ENCODE measurements at regions of chr9 and their contacts with region 1.

Region 1: DNA sequence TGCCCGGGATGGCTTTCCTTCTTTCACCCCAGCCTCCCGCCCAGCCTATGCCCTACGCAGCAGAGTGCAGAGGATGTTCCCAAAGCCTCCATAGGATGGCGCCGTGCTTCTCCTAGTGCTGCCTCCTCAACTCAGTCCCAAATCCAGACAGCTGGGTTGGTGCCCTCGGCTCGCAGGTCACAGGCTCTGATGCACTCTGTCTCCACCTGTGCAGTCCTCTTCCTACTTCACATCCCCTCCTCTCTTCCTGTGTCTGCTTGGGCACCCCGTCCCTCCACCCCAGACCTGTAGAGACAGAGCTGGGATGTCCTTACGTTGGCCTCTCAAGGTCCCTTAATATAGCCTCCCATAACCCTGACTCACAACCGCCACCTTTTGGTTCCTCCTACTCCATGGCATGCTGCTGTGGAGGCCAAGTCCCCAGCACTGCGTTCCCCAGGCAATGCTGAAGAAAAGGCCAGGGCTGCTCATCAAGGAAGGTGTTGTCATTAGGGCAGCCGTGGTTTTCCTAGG is 314.4 kb downstream of the GADD45G start:
- DNase-seq: peak; percentile 41
- H3K4me3 Mint-ChIP-seq: peak overlapping the region; percentile 16
- H3K27ac Mint-ChIP-seq: no peak overlapping the region
- H3K4me1 Mint-ChIP-seq: peaks cover 51% of the 10 kb centered on the region
- H3K27me3 Mint-ChIP-seq: peaks cover 2% of the 10 kb centered on the region

Region 2: DNA sequence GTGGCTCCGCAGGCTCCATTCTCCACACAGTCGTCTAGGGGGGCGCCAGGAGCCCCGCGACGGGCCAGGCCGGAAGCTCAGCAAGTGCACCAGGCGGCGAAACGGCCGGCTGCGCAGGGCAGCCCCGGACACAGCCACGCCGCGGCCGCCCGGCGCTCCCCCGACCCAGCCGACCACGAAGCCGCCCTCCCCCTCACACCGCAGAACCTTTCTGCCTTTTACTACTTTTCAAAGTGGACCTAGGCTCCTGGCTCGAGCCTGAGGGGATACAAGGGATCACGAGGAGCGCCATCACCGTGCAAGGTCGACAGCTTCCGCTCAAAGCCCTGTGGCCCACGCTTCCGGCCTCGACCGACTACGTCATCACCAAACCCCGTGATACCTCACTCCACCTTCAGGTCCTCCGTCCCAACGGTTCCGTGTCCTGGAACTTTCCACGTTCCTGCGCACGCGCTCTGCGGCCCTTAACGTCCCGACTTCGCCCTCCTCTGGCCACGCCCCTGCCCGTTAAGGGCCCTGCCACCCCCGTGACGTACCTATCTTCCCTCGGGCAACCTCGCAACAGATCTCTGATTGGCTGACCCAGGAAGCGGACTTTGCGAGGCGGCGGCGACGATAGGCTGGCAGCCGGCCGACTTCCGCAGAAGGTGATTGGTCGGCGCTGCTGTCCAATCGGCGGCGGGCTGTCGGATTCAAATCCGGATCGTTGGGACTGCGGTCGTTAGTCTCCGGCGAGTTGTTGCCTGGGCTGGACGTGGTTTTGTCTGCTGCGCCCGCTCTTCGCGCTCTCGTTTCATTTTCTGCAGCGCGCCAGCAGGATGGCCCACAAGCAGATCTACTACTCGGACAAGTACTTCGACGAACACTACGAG is 608.5 kb before region 1 on chr9 and contains the start of gene CKS2:
- intact Hi-C with region 1: loop called (anchors 5 kb)
- DNase-seq: peak; percentile 100
- H3K4me3 Mint-ChIP-seq: peak within 1 kb of the TSS; percentile 92
- H3K27ac Mint-ChIP-seq: peak within 1 kb of the TSS; percentile 98
- H3K4me1 Mint-ChIP-seq: peaks cover 31% of the 10 kb centered on the region
- H3K27me3 Mint-ChIP-seq: peaks cover 2% of the 10 kb centered on the region
- total RNA-seq, gene CKS2: 148 and 162 TPM in 2 replicates

Region 3: DNA sequence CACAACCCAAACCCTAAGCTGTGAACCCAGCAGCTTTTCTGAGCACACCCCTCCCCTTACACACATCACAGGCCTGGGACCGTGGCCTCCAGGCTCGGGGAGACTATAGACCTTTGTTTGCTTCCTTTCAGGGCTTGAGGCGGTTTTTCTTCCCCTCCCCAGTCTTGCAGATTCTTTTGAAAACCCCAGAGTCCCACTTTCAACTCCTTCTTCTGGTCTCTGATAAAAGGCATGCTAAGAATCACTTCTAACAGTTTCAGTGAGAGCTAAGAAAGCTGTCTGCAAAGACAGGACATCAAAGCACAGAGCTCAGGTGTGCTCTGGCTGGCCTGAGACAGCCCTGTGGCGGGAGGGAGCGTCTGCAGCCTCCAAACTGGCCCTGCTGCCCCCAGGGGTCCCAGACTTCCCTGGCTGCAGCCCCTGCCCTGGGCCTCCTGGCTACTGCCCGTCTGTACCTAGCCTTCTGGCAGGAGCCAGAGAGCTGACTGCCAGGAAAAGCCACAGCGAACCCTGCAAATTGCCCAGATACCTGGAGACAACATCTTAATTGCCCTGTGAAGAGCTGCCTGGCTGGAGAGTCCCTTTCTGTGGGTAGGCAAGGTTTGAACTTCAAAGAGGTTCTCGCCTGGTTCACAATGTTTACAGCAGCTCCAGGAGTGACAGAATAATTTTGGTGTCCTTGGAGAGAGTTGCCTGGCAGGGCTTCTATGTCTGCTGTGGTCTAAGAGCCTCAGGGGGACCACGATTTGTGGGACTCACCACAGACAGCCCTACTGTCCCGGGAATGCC is 175.5 kb before region 1 on chr9:
- intact Hi-C with region 1: loop called (anchors 1 kb)
- DNase-seq: peak; percentile 75
- H3K4me3 Mint-ChIP-seq: peak overlapping the region; percentile 25
- H3K27ac Mint-ChIP-seq: peak overlapping the region; percentile 82
- H3K4me1 Mint-ChIP-seq: peaks cover 90% of the 10 kb centered on the region
- H3K27me3 Mint-ChIP-seq: no peaks in the 10 kb centered on the region

Region 4: GRCh38 chr9:89941875-89942274 is 22.6 kb after region 1 on chr9:
- intact Hi-C with region 1: loop called (anchors 1 kb)
- DNase-seq: no peak
- H3K4me3 Mint-ChIP-seq: no peak overlapping the region
- H3K27ac Mint-ChIP-seq: peak overlapping the region; percentile 40
- H3K4me1 Mint-ChIP-seq: peaks cover 10% of the 10 kb centered on the region
- H3K27me3 Mint-ChIP-seq: peaks cover 5% of the 10 kb centered on the region

Region 5: DNA sequence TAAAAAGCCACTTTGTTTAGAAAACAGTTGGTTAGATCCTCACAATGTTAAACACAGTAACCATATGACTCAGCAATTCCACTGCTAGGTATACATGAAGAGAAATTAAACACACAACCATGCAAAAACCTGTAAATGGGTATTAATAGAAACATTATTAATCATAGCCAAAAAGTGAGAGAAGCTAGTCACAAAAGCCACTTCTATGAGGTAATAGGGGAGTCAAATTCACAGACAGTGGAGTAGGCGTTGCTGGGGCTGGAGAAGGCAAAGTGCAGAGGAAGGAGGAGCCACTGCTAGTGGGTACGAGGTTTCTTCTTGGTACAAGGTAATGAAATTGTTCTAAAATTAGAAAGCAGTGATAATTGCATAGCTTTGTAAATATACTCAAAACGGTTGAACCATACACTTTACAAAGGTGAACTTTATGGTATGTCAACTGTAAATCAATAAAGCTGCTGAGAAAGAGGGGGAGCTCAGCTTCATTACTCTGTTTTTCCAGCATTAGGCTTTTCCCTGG is 50.0 kb after region 1 on chr9:
- intact Hi-C with region 1: loop called (anchors 1 kb)
- DNase-seq: no peak
- H3K4me3 Mint-ChIP-seq: peak overlapping the region; percentile 15
- H3K27ac Mint-ChIP-seq: peak overlapping the region; percentile 55
- H3K4me1 Mint-ChIP-seq: peaks cover 59% of the 10 kb centered on the region
- H3K27me3 Mint-ChIP-seq: no peaks in the 10 kb centered on the region

Region 6: GRCh38 chr9:89999534-90000370 is 80.5 kb after region 1 on chr9:
- intact Hi-C with region 1: loop called (anchors 1 kb)
- DNase-seq: peak; percentile 68
- H3K4me3 Mint-ChIP-seq: peak overlapping the region; percentile 69
- H3K27ac Mint-ChIP-seq: peak overlapping the region; percentile 75
- H3K4me1 Mint-ChIP-seq: peaks cover 35% of the 10 kb centered on the region
- H3K27me3 Mint-ChIP-seq: no peaks in the 10 kb centered on the region

Measured in activated T-helper 1 cell treated with anti-CD3 and anti-CD28 coated beads, Interleukin-12 subunit alpha, Interleukin-12 subunit beta, Interleukin-2, Interleukin-4 antibody, amounts not matched to agents 30 ng/mL and 10 ng/mL and 1 ng/mL, durations not matched to agents 14 hours and 24 hours and 36 hours (primary cell).